ENCODE measurements at regions of chr4 and their contacts with region 1.

Region 1: GRCh38 chr4:186587416-186588018 is 32.1 kb upstream of the MTNR1A start:
- DNase-seq: peak; percentile 41 to 90
- H3K4me3 ChIP-seq: no peak overlapping the region
- CTCF ChIP-seq: no peak
- POLR2A ChIP-seq: no peak

Region 2: DNA sequence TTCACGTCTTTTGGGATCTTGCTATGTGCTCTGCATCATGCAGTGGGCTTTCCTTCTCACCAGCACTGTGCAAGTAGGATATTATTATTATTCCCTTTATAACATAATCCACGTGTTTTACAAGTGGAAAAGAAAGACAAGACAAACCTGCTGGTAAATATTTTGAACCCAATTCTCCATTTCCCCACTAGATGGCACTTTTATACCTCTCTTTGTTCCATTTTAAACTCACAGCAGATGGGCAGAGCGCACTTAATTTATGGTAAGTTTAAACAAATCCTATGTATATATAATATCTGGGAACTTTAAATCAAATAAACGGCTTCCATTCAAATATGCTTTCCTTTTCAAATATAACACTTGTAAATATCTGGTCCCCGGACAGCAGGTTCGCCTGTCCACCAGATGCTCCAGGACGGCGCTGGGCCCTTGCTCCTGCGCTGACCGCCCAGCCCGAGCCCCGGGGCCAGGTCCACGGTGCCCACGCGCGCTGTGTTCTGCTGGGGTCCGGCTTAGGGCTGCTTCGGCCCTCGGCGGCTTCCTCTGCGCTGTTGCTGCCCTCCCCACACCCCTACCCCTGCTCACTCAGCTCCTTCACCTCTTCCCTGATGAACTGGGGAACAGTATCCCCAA is 290.4 kb before region 1 on chr4:
- intact Hi-C with region 1: loop called (anchors 5 kb)
- DNase-seq: no peak
- H3K4me3 ChIP-seq: no peak overlapping the region
- CTCF ChIP-seq: no peak
- POLR2A ChIP-seq: no peak